Heart left ventricle (tissue), 16 donors: ENCODE measurements at regions of chr15 and their contacts with region 1.

Region 1: DNA sequence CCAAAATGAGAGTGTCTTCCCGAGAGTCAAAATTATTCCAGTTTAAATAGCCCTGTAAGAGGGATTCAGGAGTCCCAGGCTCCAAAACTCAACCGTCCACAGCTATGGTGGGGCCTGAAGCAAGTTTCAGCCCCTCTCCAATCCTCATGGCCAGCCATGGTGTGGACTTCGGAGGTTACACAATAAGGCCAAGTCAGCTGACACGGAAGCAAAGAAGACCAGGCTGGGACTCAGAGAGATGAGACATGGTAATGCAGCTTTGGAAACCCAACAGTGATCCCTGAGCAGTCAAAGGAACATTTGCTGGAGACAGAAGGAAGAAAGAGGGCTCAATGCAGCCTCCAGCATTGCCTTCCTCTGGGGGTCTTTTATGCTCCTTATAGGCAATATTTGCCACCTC is 324.6 kb upstream of the TLE3 start:
- DNase-seq: no peak
- ATAC-seq: no peak
- H3K4me3 ChIP-seq: no peak overlapping the region
- H3K27ac ChIP-seq: no peak overlapping the region
- H3K4me1 ChIP-seq: no peaks in the 10 kb centered on the region
- H3K27me3 ChIP-seq: peaks cover 0 to 46% (median 2%) of the 10 kb centered on the region in 9 donors
- CTCF ChIP-seq: no peak
- POLR2A ChIP-seq: no peak

Region 2: GRCh38 chr15:70474471-70475396 is 52.4 kb after region 1 on chr15:
- intact Hi-C with region 1: loop called in 1 of 10 experiments (anchors 2 kb)
- DNase-seq: peak; percentile 34 to 79 (median 45)
- ATAC-seq: peak in 3 of 4 donors; percentile 38 to 68 (median 55)
- H3K4me3 ChIP-seq: peak overlapping the region in 8 of 12 donors; percentile 5 to 37 (median 19)
- H3K27ac ChIP-seq: peak overlapping the region in 11 of 12 donors; percentile 1 to 94 (median 45)
- H3K4me1 ChIP-seq: peaks cover 0 to 45% (median 14%) of the 10 kb centered on the region in 12 donors
- H3K27me3 ChIP-seq: peaks cover 0 to 7% (median 0%) of the 10 kb centered on the region in 9 donors
- CTCF ChIP-seq: no peak
- POLR2A ChIP-seq: no peak